PC-3 (cell line): ENCODE measurements at regions of chr3 and their contacts with region 1.

Region 1: DNA sequence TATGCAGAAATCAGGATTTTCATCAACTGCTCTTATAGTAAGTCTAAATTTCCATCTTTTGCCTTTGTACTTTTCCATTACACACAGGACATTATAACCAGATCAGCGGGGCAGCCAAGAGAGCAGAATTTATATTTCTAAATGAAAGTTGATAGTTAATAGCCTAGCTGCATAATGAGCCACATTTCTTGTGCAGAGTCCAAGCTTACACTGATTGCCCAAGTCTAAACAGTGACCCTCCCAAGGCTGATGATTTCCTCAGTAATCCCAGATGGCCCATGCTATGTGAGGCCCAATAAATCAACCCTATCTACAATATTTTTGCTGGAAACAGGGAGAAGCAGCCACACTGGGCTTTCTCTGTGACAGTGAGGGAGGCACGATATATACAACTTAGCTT is 475.8 kb upstream of the KCNMB2 start:
- DNase-seq: no peak
- ATAC-seq: no peak
- H3K4me3 ChIP-seq: no peak overlapping the region
- H3K27ac ChIP-seq: no peak overlapping the region
- H3K4me1 ChIP-seq: peaks cover 11% of the 10 kb centered on the region
- H3K27me3 ChIP-seq: no peaks in the 10 kb centered on the region
- CTCF ChIP-seq: no peak

Region 2: GRCh38 chr3:177835008-177835407 is 225.4 kb before region 1 on chr3:
- CTCF ChIA-PET with region 1: no interaction called
- POLR2A ChIA-PET with region 1: no interaction called
- intact Hi-C with region 1: loop called (anchors 10 kb)
- DNase-seq: peak; percentile 92
- ATAC-seq: peak; percentile 96
- H3K4me3 ChIP-seq: no peak overlapping the region
- H3K27ac ChIP-seq: peak overlapping the region; percentile 40
- H3K4me1 ChIP-seq: peaks cover 34% of the 10 kb centered on the region
- H3K27me3 ChIP-seq: no peaks in the 10 kb centered on the region
- CTCF ChIP-seq: no peak